ENCODE measurements at regions of chr1 and their contacts with region 1.

Region 1: GRCh38 chr1:80696546-80696945 is 1104.2 kb upstream of the ADGRL2 start:
- DNase-seq: no peak
- H3K4me3 ChIP-seq: no peak overlapping the region
- H3K27ac ChIP-seq: no peak overlapping the region
- H3K4me1 ChIP-seq: no peaks in the 10 kb centered on the region
- H3K27me3 ChIP-seq: no peaks in the 10 kb centered on the region
- CTCF ChIP-seq: no peak

Region 2: DNA sequence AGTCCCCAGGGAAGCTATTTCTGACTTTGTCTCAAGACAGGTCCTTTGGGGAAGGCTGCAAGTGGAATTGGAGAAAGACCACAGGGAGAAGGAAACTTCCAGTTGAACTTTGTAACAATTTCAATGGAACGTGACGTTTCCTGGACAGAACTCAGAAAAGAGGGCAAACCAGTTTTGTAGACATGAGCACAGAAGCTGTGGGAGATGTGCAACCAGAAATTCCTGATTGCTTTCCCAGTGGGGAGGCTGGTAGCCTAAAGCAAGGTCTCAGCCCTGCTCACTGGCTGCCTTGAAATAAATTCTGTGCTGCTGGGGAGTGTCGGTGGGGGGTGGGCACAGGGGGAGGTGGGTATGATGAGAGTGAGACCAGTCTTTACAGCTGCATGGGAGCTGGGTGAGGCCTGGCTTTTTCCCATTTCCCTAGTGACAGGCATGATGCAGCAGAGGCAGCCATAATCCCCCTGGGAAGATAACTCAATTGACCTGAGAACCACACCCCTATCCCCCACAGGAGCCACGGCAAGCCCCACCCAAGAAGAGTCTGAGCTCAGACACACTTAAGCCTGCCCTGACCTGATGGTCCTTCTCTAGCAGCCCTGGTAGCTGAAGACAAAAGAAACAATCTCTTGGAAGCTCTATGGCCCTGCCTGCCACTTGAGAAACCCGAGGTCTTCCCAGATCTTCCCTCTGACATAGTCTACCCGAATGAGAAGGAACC is 102.4 kb before region 1 on chr1:
- CTCF ChIA-PET with region 1: no interaction called
- dilution Hi-C with region 1: loop called (anchors 5 kb)
- in situ Hi-C with region 1: no loop called
- intact Hi-C with region 1: no loop called
- DNase-seq: peak; percentile 4
- H3K4me3 ChIP-seq: no peak overlapping the region
- H3K27ac ChIP-seq: no peak overlapping the region
- H3K4me1 ChIP-seq: no peaks in the 10 kb centered on the region
- H3K27me3 ChIP-seq: no peaks in the 10 kb centered on the region
- CTCF ChIP-seq: no peak

Region 3: GRCh38 chr1:81330521-81330920 is 634.0 kb after region 1 on chr1:
- CTCF ChIA-PET with region 1: no interaction called
- dilution Hi-C with region 1: no loop called
- in situ Hi-C with region 1: no loop called
- intact Hi-C with region 1: no loop called
- DNase-seq: no peak
- H3K4me3 ChIP-seq: no peak overlapping the region
- H3K27ac ChIP-seq: no peak overlapping the region
- H3K4me1 ChIP-seq: peaks cover under 1% of the 10 kb centered on the region
- H3K27me3 ChIP-seq: no peaks in the 10 kb centered on the region
- CTCF ChIP-seq: no peak